ENCODE measurements at regions of chr5 and their contacts with region 1.

Region 1: DNA sequence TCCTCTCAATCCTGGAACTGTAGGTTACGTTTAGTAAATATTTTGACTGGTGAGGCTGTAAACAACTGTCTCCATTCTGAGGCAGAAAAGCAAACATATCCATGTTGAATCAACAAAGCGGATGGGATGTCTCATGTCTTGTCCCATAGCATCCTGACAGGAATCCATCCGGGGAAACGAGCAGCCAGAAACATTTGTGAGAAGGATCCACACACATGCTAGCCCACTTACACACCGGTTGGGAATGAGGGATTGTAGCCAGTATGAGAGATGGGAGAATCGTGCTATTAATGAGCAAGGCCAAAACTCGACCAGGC is 117.5 kb downstream of the FSTL4 start:
- DNase-seq: no peak
- ATAC-seq: no peak
- H3K4me3 ChIP-seq: no peak overlapping the region
- H3K4me3 Mint-ChIP-seq: no peak overlapping the region
- H3K27ac ChIP-seq: no peak overlapping the region
- H3K27ac Mint-ChIP-seq: no peak overlapping the region
- H3K4me1 ChIP-seq: no peaks in the 10 kb centered on the region
- H3K4me1 Mint-ChIP-seq: no peaks in the 10 kb centered on the region
- H3K27me3 ChIP-seq: peaks cover 4 to 5% of the 10 kb centered on the region in 2 experiments
- H3K27me3 Mint-ChIP-seq: peaks cover 7% of the 10 kb centered on the region
- CTCF ChIP-seq: no peak

Region 2: DNA sequence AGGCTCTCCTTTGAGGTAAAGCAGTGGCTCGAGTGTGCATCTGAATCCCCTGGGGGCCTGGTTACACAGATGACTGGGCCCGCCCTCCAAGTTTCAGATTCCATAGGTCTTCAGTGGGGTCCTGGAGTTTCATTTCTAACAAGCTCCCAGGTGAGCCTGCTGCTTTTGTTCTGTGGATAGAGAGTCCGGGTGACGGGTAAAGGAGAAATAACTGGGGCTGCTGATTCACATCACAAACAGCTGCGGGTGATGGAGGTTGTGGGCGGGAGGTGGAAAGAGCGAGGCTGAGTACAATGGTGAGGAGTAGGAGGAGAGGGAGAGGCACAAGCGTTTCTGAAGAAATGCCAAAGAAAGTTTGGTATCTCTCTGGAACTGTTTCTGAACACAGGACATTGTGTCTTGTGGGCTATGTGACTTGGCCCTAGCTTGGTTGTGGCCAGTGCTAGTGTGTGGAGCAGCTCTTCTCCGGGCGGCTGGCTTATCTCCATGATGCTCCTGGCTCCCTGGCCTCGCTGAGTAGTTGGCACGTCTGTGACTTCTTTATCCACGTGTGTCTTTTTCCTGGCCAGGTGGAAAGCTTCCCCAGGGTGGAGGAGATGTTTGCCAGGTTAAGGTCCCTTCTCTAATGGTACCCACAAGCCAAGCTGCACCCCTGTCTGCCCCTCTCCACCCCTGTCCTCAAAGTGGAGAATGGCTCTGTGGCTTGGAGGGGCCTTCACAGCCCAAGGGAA is 381.4 kb before region 1 on chr5:
- CTCF ChIA-PET with region 1: no interaction called
- POLR2A ChIA-PET with region 1: no interaction called
- intact Hi-C with region 1: no loop called
- DNase-seq: no peak
- ATAC-seq: no peak
- H3K4me3 ChIP-seq: no peak overlapping the region
- H3K4me3 Mint-ChIP-seq: no peak overlapping the region
- H3K27ac ChIP-seq: no peak overlapping the region
- H3K27ac Mint-ChIP-seq: no peak overlapping the region
- H3K4me1 ChIP-seq: peaks cover 7% of the 10 kb centered on the region
- H3K4me1 Mint-ChIP-seq: peaks cover 7% of the 10 kb centered on the region
- H3K27me3 ChIP-seq: no peaks in the 10 kb centered on the region
- H3K27me3 Mint-ChIP-seq: no peaks in the 10 kb centered on the region
- CTCF ChIP-seq: no peak

Region 3: GRCh38 chr5:133526368-133526767 is 31.5 kb after region 1 on chr5:
- CTCF ChIA-PET with region 1: no interaction called
- POLR2A ChIA-PET with region 1: no interaction called
- intact Hi-C with region 1: loop called in 1 of 2 experiments (anchors 1 kb)
- DNase-seq: no peak
- ATAC-seq: no peak
- H3K4me3 ChIP-seq: no peak overlapping the region
- H3K4me3 Mint-ChIP-seq: no peak overlapping the region
- H3K27ac ChIP-seq: no peak overlapping the region
- H3K27ac Mint-ChIP-seq: no peak overlapping the region
- H3K4me1 ChIP-seq: no peaks in the 10 kb centered on the region
- H3K4me1 Mint-ChIP-seq: no peaks in the 10 kb centered on the region
- H3K27me3 ChIP-seq: peaks cover 0 to 2% of the 10 kb centered on the region in 2 experiments
- H3K27me3 Mint-ChIP-seq: peaks cover 11% of the 10 kb centered on the region
- CTCF ChIP-seq: no peak

Region 4: DNA sequence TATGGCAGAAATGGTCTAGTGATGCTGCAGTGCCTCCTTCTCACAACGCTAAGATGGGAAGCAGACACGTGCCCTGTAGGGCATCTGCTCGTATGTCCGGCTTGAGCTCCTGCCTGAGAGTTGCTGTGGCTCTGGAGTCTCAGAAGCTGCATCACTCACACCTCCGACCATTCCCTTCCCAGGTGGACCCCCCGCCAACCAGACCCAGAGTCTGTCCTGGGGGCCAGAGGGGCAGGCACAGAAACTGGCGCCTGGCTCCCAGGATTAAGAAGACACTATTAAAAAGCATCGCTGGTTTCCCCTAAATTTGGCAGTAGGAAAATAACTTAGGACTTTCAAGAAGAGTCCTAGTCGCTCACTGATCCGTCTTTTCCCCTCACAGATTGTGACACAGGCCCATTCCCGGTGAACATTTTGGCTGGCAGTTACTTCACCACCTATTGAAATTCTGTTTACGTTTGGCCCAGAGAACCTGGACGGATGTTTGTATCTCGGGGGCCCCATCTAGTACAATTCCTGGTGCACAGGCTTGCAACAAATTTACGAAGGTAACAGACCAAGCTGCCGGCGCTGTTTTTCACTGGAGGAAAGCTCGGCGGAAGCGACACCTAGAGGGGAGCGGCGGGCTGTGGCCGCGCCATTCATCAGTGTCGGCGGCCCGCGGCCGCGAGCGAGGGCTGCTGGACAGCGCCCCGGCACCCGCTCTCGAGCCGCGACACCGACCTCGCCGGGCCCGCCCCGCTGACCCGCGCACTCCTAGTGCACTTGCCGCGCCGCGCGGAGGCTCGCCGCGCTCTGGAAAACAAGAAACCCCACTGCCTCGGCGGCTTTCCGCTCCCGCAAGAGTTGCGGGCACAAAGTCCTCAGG is 115.8 kb after region 1 on chr5:
- CTCF ChIA-PET with region 1: no interaction called
- POLR2A ChIA-PET with region 1: no interaction called
- intact Hi-C with region 1: no loop called
- DNase-seq: peak in 7 of 14 experiments; percentile 11 to 49 (median 21)
- ATAC-seq: peak; percentile 43
- H3K4me3 ChIP-seq: peak overlapping the region; percentile 41
- H3K4me3 Mint-ChIP-seq: peak overlapping the region; percentile 62
- H3K27ac ChIP-seq: no peak overlapping the region
- H3K27ac Mint-ChIP-seq: no peak overlapping the region
- H3K4me1 ChIP-seq: peaks cover 16% of the 10 kb centered on the region
- H3K4me1 Mint-ChIP-seq: peaks cover 11% of the 10 kb centered on the region
- H3K27me3 ChIP-seq: peaks cover 50 to 51% of the 10 kb centered on the region in 2 experiments
- H3K27me3 Mint-ChIP-seq: peaks cover 70% of the 10 kb centered on the region
- CTCF ChIP-seq: peak; percentile 18

Measured in CD4-positive, alpha-beta T cell (primary cell).